ENCODE measurements at regions of chr2 and their contacts with region 1.

Region 1: DNA sequence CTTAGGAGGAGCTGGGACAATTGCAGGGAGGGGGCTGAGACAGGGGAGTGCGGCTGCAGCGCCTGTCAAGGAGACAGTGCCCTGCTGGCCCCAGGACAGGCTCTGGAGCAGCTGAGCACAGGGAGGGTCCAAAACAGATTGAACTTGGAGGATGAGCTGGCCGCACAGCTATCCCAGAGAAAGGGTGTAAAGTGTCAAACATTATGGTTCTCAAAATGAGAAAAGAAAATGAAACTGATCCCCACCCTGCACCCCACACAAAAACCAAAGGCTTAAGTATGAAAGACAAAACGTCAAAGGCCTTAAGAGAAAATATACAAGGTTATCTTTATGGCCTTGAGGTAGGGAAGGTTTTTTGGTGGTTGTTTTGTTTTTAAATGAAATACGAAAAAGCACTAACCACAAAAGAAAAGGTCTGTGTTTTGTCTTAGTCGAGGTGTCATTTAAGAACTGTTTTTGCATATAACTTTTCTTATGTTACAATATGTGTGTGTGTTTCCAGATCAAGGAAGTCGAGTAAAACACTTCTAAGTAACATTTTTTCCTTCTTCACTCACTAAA is 111.8 kb downstream of the HDAC4 start:
- DNase-seq: peak; percentile 69
- ATAC-seq: peak; percentile 65
- H3K4me3 Mint-ChIP-seq: peak overlapping the region; percentile 36
- H3K27ac Mint-ChIP-seq: peak overlapping the region; percentile 89
- H3K4me1 Mint-ChIP-seq: peaks cover 80% of the 10 kb centered on the region
- H3K27me3 Mint-ChIP-seq: peaks cover 21% of the 10 kb centered on the region

Region 2: GRCh38 chr2:239216614-239217273 is 72.3 kb before region 1 on chr2:
- CTCF ChIA-PET with region 1: no interaction called
- POLR2A ChIA-PET with region 1: interaction called, 4 read pairs
- intact Hi-C with region 1: loop called (anchors 1 to 2 kb)
- DNase-seq: peak; percentile 71
- ATAC-seq: peak; percentile 97
- H3K4me3 Mint-ChIP-seq: peak overlapping the region; percentile 66
- H3K27ac Mint-ChIP-seq: peak overlapping the region; percentile 95
- H3K4me1 Mint-ChIP-seq: peaks cover 73% of the 10 kb centered on the region
- H3K27me3 Mint-ChIP-seq: no peaks in the 10 kb centered on the region

Region 3: DNA sequence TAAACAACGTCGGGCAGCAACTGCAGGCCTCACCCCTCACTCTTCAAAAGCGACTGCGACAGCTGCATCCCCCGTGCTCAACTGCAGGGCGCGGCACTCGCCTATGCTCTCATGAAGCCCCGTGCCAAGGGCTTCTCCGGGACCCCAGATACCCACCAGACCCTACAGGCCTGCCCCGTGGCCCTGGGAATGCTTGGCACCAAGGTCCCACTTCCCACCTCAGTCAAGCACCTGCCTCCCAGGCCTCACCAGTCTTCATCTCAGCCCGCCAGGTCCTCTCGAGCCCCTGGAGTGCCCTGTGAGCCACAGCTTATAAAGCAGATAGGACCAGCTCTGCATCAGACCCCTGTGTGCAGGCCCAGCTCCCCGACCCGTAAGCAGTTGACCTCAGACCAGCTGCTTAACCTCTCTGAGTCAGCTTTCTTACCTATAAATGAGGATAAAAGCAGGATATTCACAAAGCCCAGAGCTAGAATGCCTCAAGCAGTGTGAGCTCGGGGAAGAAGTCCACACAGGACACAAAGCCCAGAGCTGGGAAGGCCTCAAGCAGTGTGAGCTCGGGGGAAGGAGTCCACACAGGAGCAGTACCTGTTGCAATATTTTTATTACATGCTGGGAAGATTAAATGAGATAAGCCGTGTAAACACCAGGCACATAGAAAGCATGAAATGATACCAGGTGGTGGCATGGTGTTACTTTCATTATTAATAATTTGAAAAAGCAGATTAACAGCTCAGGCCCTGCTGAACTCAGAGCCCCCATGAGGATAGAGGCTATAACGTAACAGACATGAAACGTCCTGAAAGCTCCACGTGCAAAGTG is 14.9 kb after region 1 on chr2:
- CTCF ChIA-PET with region 1: interaction called, 16 read pairs
- POLR2A ChIA-PET with region 1: interaction called, 3 read pairs
- intact Hi-C with region 1: loop called in 1 of 2 experiments (anchors 2 kb)
- DNase-seq: peak; percentile 46
- ATAC-seq: peak; percentile 89
- H3K4me3 Mint-ChIP-seq: no peak overlapping the region
- H3K27ac Mint-ChIP-seq: no peak overlapping the region
- H3K4me1 Mint-ChIP-seq: peaks cover 38% of the 10 kb centered on the region
- H3K27me3 Mint-ChIP-seq: peaks cover 4% of the 10 kb centered on the region

Region 4: DNA sequence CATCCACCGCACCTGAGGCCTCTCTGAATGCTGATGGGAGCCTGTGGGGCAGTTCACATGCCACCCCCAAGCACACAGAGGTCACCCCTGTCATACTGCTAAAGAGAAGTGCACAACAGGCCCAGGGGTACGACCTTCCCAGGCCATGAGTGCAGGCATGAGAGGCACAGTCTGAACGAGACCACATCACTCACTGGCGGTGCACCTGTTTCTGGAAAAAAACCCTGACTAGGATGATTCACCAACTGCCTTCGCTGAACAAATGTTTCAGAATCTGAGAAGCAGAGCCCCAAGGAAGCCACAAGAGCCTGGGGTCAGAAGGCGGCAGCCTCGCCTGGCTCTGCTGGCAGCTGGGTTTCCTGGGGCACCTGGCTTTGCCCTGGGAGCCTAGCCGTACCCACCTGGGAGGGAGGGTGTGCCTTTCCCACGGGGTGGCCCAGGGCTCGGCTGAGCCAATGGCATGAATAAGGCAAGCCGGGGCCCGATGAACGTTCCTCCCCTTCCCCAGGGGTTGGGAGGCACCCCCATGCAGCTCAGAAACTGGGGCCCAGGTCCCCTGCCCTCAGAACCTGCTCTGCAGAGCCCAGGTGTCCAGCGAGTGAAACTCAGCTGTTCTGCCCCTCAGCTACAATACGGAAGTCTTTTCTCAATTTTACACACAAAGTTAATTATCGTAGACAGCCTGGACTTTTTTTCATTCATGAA is 38.0 kb after region 1 on chr2:
- CTCF ChIA-PET with region 1: interaction called, 4 read pairs
- POLR2A ChIA-PET with region 1: interaction called, 5 read pairs
- intact Hi-C with region 1: loop called (anchors 2 kb)
- DNase-seq: peak; percentile 89
- ATAC-seq: peak; percentile 85
- H3K4me3 Mint-ChIP-seq: peak overlapping the region; percentile 17
- H3K27ac Mint-ChIP-seq: peak overlapping the region; percentile 74
- H3K4me1 Mint-ChIP-seq: peaks cover 75% of the 10 kb centered on the region
- H3K27me3 Mint-ChIP-seq: peaks cover 5% of the 10 kb centered on the region

Region 5: GRCh38 chr2:239544143-239544917 is 255.3 kb after region 1 on chr2:
- CTCF ChIA-PET with region 1: no interaction called
- POLR2A ChIA-PET with region 1: no interaction called
- intact Hi-C with region 1: loop called in 1 of 2 experiments (anchors 1 kb)
- DNase-seq: peak; percentile 4
- ATAC-seq: no peak
- H3K4me3 Mint-ChIP-seq: no peak overlapping the region
- H3K27ac Mint-ChIP-seq: peak overlapping the region; percentile 83
- H3K4me1 Mint-ChIP-seq: peaks cover 50% of the 10 kb centered on the region
- H3K27me3 Mint-ChIP-seq: peaks cover 7% of the 10 kb centered on the region